Activated naive CD4-positive, alpha-beta T cell treated with anti-CD3 and anti-CD28 coated beads for 36 hours (primary cell): ENCODE measurements at regions of chr10 and their contacts with region 1.

Region 1: GRCh38 chr10:16891375-16892313 is 74.4 kb upstream of the RSU1 start:
- DNase-seq: peak; percentile 71
- H3K4me3 Mint-ChIP-seq: peak overlapping the region; percentile 52
- H3K27ac Mint-ChIP-seq: peak overlapping the region; percentile 69
- H3K4me1 Mint-ChIP-seq: peaks cover 8% of the 10 kb centered on the region
- H3K27me3 Mint-ChIP-seq: no peaks in the 10 kb centered on the region

Region 2: DNA sequence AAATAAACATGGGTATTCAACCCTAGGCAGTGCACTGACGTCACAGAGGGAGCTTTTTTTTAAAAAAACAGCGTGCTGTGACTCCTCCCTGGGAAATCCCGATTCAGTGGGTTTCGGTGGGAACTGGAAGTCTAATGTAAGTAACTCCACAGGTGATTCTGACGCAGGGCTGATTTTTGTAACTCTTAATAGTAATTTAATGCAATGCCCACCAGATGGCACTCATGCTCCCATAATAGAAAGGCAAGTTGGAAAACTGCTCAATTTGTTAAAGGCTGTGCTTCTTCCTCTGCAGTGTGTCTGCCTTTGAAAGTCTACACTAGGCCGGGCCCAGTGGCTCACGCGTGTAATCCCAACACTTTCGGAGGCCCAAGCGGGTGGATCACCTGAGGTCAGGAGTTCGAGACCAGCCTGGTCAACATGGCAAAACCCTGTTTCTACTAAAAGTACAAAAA is 63.5 kb before region 1 on chr10:
- CTCF ChIA-PET with region 1: no interaction called
- intact Hi-C with region 1: loop called (anchors 2 kb)
- DNase-seq: peak; percentile 81
- H3K4me3 Mint-ChIP-seq: no peak overlapping the region
- H3K27ac Mint-ChIP-seq: no peak overlapping the region
- H3K4me1 Mint-ChIP-seq: peaks cover 4% of the 10 kb centered on the region
- H3K27me3 Mint-ChIP-seq: no peaks in the 10 kb centered on the region

Region 3: GRCh38 chr10:17001961-17002749 is 110.5 kb after region 1 on chr10:
- CTCF ChIA-PET with region 1: no interaction called
- intact Hi-C with region 1: loop called (anchors 1 kb)
- DNase-seq: peak; percentile 44
- H3K4me3 Mint-ChIP-seq: no peak overlapping the region
- H3K27ac Mint-ChIP-seq: peak overlapping the region; percentile 5
- H3K4me1 Mint-ChIP-seq: peaks cover 57% of the 10 kb centered on the region
- H3K27me3 Mint-ChIP-seq: peaks cover 5% of the 10 kb centered on the region

Region 4: GRCh38 chr10:17200912-17201793 is 309.5 kb after region 1 on chr10 and contains the start of gene TRDMT1:
- CTCF ChIA-PET with region 1: interaction called, 4 read pairs
- intact Hi-C with region 1: loop called (anchors 1 kb)
- DNase-seq: peak; percentile 77
- H3K4me3 Mint-ChIP-seq: peak within 1 kb of the TSS; percentile 86
- H3K27ac Mint-ChIP-seq: peak within 1 kb of the TSS; percentile 92
- H3K4me1 Mint-ChIP-seq: peaks cover 35% of the 10 kb centered on the region
- H3K27me3 Mint-ChIP-seq: no peaks in the 10 kb centered on the region
- total RNA-seq, gene TRDMT1: 6.5 to 7.2 TPM

Region 5: GRCh38 chr10:17257466-17258321 is 366.1 kb after region 1 on chr10:
- CTCF ChIA-PET with region 1: interaction called, 9 read pairs
- intact Hi-C with region 1: loop called (anchors 1 kb)
- DNase-seq: peak; percentile 67
- H3K4me3 Mint-ChIP-seq: peak overlapping the region; percentile 3
- H3K27ac Mint-ChIP-seq: no peak overlapping the region
- H3K4me1 Mint-ChIP-seq: peaks cover 4% of the 10 kb centered on the region
- H3K27me3 Mint-ChIP-seq: no peaks in the 10 kb centered on the region